ENCODE measurements at regions of chr18 and their contacts with region 1.

Region 1: GRCh38 chr18:53698907-53699306 is 525.6 kb downstream of the MBD2 start:
- DNase-seq: peak; percentile 17
- H3K4me3 ChIP-seq: no peak overlapping the region
- H3K27ac ChIP-seq: no peak overlapping the region
- H3K4me1 ChIP-seq: no peaks in the 10 kb centered on the region
- H3K27me3 ChIP-seq: no peaks in the 10 kb centered on the region
- CTCF ChIP-seq: peak; percentile 55 to 87

Region 2: GRCh38 chr18:53864770-53865169 is 165.9 kb after region 1 on chr18:
- CTCF ChIA-PET with region 1: no interaction called
- dilution Hi-C with region 1: no loop called
- in situ Hi-C with region 1: no loop called
- intact Hi-C with region 1: loop called (anchors 1 kb)
- DNase-seq: peak; percentile 2
- H3K4me3 ChIP-seq: no peak overlapping the region
- H3K27ac ChIP-seq: no peak overlapping the region
- H3K4me1 ChIP-seq: no peaks in the 10 kb centered on the region
- H3K27me3 ChIP-seq: peaks cover 2% of the 10 kb centered on the region
- CTCF ChIP-seq: peak; percentile 16 to 50

Region 3: DNA sequence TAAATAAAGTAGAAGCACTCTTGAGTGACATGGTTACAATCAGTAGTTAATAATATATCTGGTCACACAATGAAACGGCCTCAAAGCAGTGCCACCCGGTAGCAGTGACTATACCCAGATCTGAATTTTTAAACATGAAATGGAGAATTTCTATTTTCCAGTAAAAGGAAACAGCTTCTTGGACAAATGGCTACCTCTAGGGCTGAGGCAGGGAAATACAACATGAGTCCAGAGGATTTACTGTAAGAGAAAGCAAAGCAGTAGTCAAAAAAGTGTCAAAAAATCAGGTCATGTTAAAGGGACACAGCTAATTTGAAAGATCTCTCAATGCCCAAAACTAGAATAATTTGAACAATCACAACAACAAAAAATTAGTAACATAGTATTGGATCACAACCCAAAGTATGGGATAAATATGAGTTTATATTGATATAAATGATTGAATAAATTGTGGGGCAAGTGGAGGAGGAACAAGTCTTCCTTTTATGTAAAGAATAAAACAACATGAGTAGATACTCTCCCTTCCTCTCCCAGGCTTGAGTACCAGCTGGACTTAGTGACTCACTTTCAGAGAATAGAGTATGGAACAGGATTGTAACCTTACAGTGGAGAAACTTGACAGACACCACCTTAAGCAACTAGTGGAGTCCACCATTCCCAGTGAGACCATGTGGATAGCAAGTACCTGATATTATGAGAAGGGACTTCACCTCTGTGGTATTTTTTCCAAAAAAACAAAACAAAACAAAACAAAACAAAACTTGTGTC is 344.8 kb after region 1 on chr18:
- CTCF ChIA-PET with region 1: no interaction called
- dilution Hi-C with region 1: no loop called
- in situ Hi-C with region 1: no loop called
- intact Hi-C with region 1: loop called (anchors 1 kb)
- DNase-seq: peak; percentile 67
- H3K4me3 ChIP-seq: no peak overlapping the region
- H3K27ac ChIP-seq: no peak overlapping the region
- H3K4me1 ChIP-seq: peaks cover 4% of the 10 kb centered on the region
- H3K27me3 ChIP-seq: no peaks in the 10 kb centered on the region
- CTCF ChIP-seq: peak; percentile 4 to 39

Region 4: GRCh38 chr18:54119524-54120019 is 420.7 kb after region 1 on chr18:
- CTCF ChIA-PET with region 1: interaction called, 4 read pairs
- dilution Hi-C with region 1: no loop called
- in situ Hi-C with region 1: loop called (anchors 5 to 10 kb)
- intact Hi-C with region 1: loop called (anchors 1 kb)
- DNase-seq: peak; percentile 51
- H3K4me3 ChIP-seq: no peak overlapping the region
- H3K27ac ChIP-seq: no peak overlapping the region
- H3K4me1 ChIP-seq: no peaks in the 10 kb centered on the region
- H3K27me3 ChIP-seq: no peaks in the 10 kb centered on the region
- CTCF ChIP-seq: peak; percentile 80 to 95

Region 5: DNA sequence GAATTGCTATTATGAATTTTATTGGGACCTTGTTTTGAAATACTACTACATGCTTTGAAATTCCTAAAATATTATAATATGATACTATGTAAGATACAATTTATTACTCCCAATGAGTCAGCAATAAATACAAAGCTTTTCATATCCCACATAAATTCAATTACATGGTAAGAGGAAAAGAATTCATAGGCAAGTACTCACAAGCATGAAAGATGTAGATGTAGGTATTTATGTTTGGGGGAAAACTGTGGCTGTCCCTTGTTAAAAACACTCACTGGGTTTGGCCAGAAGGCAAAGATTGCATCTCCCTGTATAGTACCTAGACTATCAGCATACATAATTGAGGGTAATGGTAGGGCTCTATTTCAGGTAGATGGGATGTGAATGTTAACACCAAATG is 435.1 kb after region 1 on chr18:
- CTCF ChIA-PET with region 1: interaction called, 23 read pairs
- dilution Hi-C with region 1: no loop called
- in situ Hi-C with region 1: loop called in 1 of 2 experiments (anchors 10 kb)
- intact Hi-C with region 1: no loop called
- DNase-seq: peak; percentile 78
- H3K4me3 ChIP-seq: no peak overlapping the region
- H3K27ac ChIP-seq: peak overlapping the region; percentile 50
- H3K4me1 ChIP-seq: peaks cover 23% of the 10 kb centered on the region
- H3K27me3 ChIP-seq: no peaks in the 10 kb centered on the region
- CTCF ChIP-seq: no peak

Measured in mammary epithelial cell (primary cell).